Mammary epithelial cell (primary cell): ENCODE measurements at regions of chrX and their contacts with region 1.

Region 1: GRCh38 chrX:45743081-45743533 is 542.4 kb upstream of the DIPK2B start:
- DNase-seq: peak; percentile 78
- H3K4me3 ChIP-seq: no peak overlapping the region
- H3K27ac ChIP-seq: peak overlapping the region; percentile 13
- H3K4me1 ChIP-seq: peaks cover 66% of the 10 kb centered on the region
- H3K27me3 ChIP-seq: no peaks in the 10 kb centered on the region
- CTCF ChIP-seq: peak; percentile 47 to 56

Region 2: GRCh38 chrX:45344594-45344993 is 398.5 kb before region 1 on chrX:
- CTCF ChIA-PET with region 1: no interaction called
- dilution Hi-C with region 1: no loop called
- in situ Hi-C with region 1: loop called in 1 of 2 experiments (anchors 25 kb)
- intact Hi-C with region 1: no loop called
- DNase-seq: no peak
- H3K4me3 ChIP-seq: no peak overlapping the region
- H3K27ac ChIP-seq: no peak overlapping the region
- H3K4me1 ChIP-seq: peaks cover 4% of the 10 kb centered on the region
- H3K27me3 ChIP-seq: no peaks in the 10 kb centered on the region
- CTCF ChIP-seq: no peak

Region 3: DNA sequence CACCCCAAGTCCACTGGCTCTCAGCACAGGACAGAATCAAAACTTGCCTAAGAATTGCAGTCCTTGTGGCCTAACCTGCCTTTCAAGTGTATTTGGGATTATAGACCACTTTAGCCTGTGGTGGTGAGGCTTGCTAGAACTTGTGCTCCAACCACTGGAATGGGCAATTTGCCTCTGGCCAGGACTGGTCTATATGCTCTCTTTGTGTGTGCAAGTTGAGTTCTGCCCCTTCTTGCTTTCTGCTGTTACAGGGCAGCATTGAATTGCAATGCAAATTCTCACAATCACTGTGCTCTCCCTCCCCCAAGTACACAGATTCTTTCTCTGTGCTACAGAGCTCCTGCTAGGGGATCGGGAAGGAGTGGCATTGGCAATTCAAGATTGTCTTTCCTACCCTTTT is 308.9 kb before region 1 on chrX:
- CTCF ChIA-PET with region 1: no interaction called
- dilution Hi-C with region 1: no loop called
- in situ Hi-C with region 1: no loop called
- intact Hi-C with region 1: loop called (anchors 10 kb)
- DNase-seq: peak; percentile 95
- H3K4me3 ChIP-seq: no peak overlapping the region
- H3K27ac ChIP-seq: peak overlapping the region; percentile 48
- H3K4me1 ChIP-seq: peaks cover 27% of the 10 kb centered on the region
- H3K27me3 ChIP-seq: no peaks in the 10 kb centered on the region
- CTCF ChIP-seq: no peak

Region 4: GRCh38 chrX:45621376-45622041 is 121.6 kb before region 1 on chrX:
- CTCF ChIA-PET with region 1: no interaction called
- dilution Hi-C with region 1: no loop called
- in situ Hi-C with region 1: no loop called
- intact Hi-C with region 1: loop called (anchors 2 kb)
- DNase-seq: peak; percentile 96
- H3K4me3 ChIP-seq: no peak overlapping the region
- H3K27ac ChIP-seq: peak overlapping the region; percentile 68
- H3K4me1 ChIP-seq: peaks cover 36% of the 10 kb centered on the region
- H3K27me3 ChIP-seq: no peaks in the 10 kb centered on the region
- CTCF ChIP-seq: no peak

Region 5: DNA sequence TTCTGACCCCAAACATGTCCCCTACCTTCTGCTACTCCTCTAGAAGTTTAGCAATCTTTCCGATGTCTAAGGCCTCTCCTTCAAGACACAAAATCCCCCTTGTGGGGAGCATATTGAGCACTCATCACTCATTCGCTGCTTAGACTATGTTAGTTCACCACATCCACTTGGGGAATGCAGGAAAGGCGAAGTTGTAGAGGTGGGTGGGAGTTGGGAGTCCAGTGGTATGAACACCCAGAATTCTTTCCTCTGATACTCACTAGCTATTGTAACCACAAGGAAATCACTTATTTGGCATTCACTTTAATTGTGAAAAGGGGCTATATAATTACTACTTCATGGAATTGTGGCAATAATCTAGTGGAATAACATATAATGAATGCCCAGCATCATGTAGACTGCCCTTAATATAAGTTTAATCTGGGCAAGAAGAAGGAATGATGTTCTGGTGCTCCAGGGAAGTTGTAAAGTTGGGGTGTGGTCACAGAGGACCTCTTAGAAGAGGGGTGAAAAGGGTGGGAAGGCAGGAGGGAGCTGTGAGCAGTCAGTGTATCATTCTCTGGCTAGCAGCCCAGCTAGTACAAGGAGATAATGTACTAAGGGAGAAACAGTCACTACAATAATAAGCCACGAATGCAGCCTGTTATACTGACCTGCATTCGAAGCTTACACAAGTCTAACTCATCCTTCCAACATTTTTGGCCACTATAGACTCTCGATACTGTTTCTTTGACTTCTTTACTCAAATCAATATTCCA is 74.2 kb before region 1 on chrX:
- CTCF ChIA-PET with region 1: no interaction called
- dilution Hi-C with region 1: no loop called
- in situ Hi-C with region 1: no loop called
- intact Hi-C with region 1: loop called (anchors 2 kb)
- DNase-seq: peak; percentile 94
- H3K4me3 ChIP-seq: no peak overlapping the region
- H3K27ac ChIP-seq: peak overlapping the region; percentile 39
- H3K4me1 ChIP-seq: peaks cover 26% of the 10 kb centered on the region
- H3K27me3 ChIP-seq: no peaks in the 10 kb centered on the region
- CTCF ChIP-seq: no peak

Region 6: GRCh38 chrX:45710081-45710801 is 32.9 kb before region 1 on chrX:
- CTCF ChIA-PET with region 1: no interaction called
- dilution Hi-C with region 1: no loop called
- in situ Hi-C with region 1: no loop called
- intact Hi-C with region 1: loop called (anchors 1 kb)
- DNase-seq: peak; percentile 99
- H3K4me3 ChIP-seq: no peak overlapping the region
- H3K27ac ChIP-seq: peak overlapping the region; percentile 93
- H3K4me1 ChIP-seq: peaks cover 54% of the 10 kb centered on the region
- H3K27me3 ChIP-seq: no peaks in the 10 kb centered on the region
- CTCF ChIP-seq: no peak